ENCODE measurements at regions of chr3 and their contacts with region 1.

Region 1: DNA sequence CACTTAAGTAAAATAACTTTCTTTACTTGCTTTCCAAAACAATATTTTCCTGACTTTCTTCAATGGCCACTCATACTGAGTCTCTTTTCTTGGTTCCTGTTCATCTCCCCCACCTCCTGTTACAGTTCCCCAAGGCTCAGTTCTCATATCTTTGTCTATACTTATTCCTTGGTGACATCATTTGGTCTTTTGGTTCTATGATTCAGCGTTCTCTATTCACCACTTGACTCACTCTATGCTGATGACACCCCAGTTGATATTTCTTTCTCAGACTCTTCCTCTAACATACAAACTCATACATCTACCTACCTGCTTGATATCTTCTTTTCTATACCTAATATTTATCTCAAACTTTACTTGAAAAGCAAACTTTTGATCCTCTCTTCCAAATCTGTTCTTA is 85.0 kb upstream of the P3H2 start:
- DNase-seq: no peak
- H3K4me3 ChIP-seq: no peak overlapping the region
- H3K27ac ChIP-seq: no peak overlapping the region
- H3K4me1 ChIP-seq: peaks cover 4% of the 10 kb centered on the region; the same call in 1 of the 2 replicates
- H3K27me3 ChIP-seq: no peaks in the 10 kb centered on the region
- CTCF ChIP-seq: no peak

Region 2: DNA sequence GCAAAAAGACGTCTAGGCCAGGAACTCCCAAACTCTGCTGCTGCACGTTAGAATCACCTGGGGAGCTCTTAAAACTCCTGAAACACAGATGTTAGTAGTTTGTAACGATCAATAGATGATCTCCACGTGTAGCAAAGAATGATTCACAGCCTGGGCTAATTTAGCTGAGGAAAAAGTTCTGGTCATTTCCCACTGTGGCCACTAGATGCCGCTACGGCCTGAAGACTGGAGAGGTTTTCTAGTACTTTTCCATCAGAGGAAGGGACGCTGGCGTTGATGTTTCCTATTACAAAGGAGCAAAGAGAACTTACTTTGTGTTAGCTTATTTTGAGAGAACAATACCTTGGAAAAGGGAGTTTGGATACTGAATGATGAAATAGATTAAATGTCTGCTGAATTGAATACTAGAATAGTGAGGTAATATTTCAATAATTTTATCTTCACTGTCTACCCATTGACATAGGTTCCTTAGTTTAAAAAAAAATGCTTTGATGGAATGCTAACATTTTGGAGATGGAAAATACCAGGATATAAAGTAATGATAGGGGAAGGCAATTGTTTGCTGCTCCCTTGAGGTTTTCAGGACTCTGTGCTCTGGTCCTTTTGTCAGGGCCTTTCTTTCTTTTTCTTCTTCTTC is 244.1 kb before region 1 on chr3:
- CTCF ChIA-PET with region 1: interaction called, 15 read pairs
- POLR2A ChIA-PET with region 1: no interaction called
- intact Hi-C with region 1: loop called (anchors 1 kb)
- DNase-seq: peak; percentile 79 to 85
- H3K4me3 ChIP-seq: no peak overlapping the region
- H3K27ac ChIP-seq: no peak overlapping the region
- H3K4me1 ChIP-seq: peaks cover 7% of the 10 kb centered on the region
- H3K27me3 ChIP-seq: no peaks in the 10 kb centered on the region
- CTCF ChIP-seq: peak; percentile 100

Region 3: DNA sequence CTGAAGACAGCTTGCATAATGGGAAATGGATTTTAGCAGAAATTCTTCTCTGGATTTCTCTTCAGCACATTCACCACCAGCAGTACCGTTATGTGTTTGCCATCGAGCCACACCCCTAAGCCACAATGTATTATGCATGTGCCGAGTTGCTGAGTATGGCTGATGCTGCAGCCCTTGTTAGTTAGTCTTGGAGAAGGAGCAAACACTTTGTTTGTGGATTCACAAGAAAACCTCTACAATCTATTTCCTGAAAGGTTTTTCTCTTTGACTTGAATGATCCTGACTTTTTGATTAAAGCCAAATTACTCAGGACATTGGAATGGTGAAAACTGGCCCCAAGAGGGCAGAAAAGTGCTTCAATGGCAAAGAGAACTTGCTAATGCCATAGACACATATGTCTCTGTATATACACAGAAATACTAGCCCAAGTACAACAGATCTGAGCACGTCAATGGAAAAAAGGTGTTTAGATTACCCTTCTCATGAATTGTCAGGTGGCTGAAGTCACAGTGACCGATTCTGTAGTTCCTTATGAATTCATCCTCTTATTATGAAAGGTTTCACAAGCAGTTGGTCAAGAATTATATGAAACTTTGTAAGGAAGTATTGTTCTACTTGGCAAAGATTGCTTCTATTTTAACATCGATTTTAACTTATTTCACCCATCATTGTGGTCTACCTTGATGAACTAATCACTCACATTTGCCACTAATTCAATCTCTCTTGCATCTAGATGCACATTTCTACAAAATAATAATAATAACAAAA is 188.0 kb before region 1 on chr3:
- CTCF ChIA-PET with region 1: no interaction called
- POLR2A ChIA-PET with region 1: no interaction called
- intact Hi-C with region 1: loop called (anchors 1 kb)
- DNase-seq: peak; percentile 55 to 65
- H3K4me3 ChIP-seq: no peak overlapping the region
- H3K27ac ChIP-seq: no peak overlapping the region
- H3K4me1 ChIP-seq: peaks cover 24% of the 10 kb centered on the region
- H3K27me3 ChIP-seq: no peaks in the 10 kb centered on the region
- CTCF ChIP-seq: peak; percentile 49; the same call in 1 of the 2 replicates

Region 4: GRCh38 chr3:190064112-190064511 is 141.6 kb before region 1 on chr3:
- CTCF ChIA-PET with region 1: interaction called, 10 read pairs
- POLR2A ChIA-PET with region 1: no interaction called
- intact Hi-C with region 1: no loop called
- DNase-seq: peak; percentile 29 to 67
- H3K4me3 ChIP-seq: no peak overlapping the region
- H3K27ac ChIP-seq: no peak overlapping the region
- H3K4me1 ChIP-seq: peaks cover 7% of the 10 kb centered on the region; the same call in 1 of the 2 replicates
- H3K27me3 ChIP-seq: no peaks in the 10 kb centered on the region
- CTCF ChIP-seq: no peak

Region 5: DNA sequence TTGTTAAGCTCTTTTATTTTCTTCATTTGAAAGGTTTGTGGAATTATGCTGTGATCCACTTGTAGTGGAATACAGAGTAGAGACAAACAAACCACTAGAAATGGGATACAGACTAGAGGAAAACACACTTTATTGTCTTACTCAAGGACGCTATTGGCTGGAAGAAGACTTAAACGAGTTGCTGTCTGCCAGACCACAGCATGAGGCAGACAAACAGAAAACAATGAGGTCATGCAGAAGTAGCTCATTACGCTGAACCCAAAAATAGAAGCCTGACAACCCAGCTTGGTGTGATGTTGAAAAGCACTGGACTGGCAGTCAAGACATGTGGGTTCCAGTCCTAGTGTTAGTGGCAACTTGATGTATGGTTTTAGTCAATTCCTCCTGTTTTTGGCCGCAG is 22.6 kb before region 1 on chr3:
- CTCF ChIA-PET with region 1: interaction called, 12 read pairs
- POLR2A ChIA-PET with region 1: interaction called, 5 read pairs
- intact Hi-C with region 1: no loop called
- DNase-seq: no peak
- H3K4me3 ChIP-seq: no peak overlapping the region
- H3K27ac ChIP-seq: no peak overlapping the region
- H3K4me1 ChIP-seq: no peaks in the 10 kb centered on the region
- H3K27me3 ChIP-seq: no peaks in the 10 kb centered on the region
- CTCF ChIP-seq: no peak